ENCODE measurements at regions of chr12 and their contacts with region 1.

Region 1: GRCh38 chr12:6554168-6555017 is 1.4 kb downstream of the IFFO1 start:
- DNase-seq: peak in 34 of 35 experiments; percentile 32 to 79 (median 59)
- ATAC-seq: peak; percentile 46 to 61 (median 58)
- H3K4me3 ChIP-seq: peak overlapping the region; percentile 70 to 81
- H3K4me3 Mint-ChIP-seq: peak overlapping the region; percentile 89 to 93 (median 90)
- H3K27ac ChIP-seq: no peak overlapping the region
- H3K27ac Mint-ChIP-seq: peak overlapping the region; percentile 75 to 84
- H3K4me1 ChIP-seq: peaks cover 15 to 69% of the 10 kb centered on the region in 2 experiments
- H3K4me1 Mint-ChIP-seq: peaks cover 50 to 59% (median 50%) of the 10 kb centered on the region in 3 donors
- H3K27me3 ChIP-seq: no peaks in the 10 kb centered on the region
- H3K27me3 Mint-ChIP-seq: no peaks in the 10 kb centered on the region

Region 2: DNA sequence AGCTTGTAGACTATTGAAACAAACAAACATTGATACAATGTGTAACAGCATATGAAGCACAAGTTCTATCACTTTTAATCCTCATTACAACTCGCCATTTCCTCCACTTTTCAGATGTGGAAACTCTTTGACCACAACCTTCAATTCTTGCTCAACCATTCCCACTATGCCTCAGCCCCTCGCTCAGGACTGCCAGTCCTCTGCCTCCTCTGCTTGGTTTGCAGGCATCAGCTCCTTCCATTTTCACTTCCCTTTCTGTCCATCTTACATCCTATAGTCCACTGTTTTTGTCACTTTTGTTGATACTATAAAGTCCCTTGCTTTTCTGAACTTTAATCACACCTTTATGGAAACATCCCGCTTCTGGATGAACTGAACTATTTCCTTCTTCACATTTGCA is 137.8 kb before region 1 on chr12:
- CTCF ChIA-PET with region 1: no interaction called
- POLR2A ChIA-PET with region 1: no interaction called
- DNase-seq: no peak
- ATAC-seq: no peak
- H3K4me3 ChIP-seq: no peak overlapping the region
- H3K4me3 Mint-ChIP-seq: no peak overlapping the region
- H3K27ac ChIP-seq: no peak overlapping the region
- H3K27ac Mint-ChIP-seq: no peak overlapping the region
- H3K4me1 ChIP-seq: no peaks in the 10 kb centered on the region
- H3K4me1 Mint-ChIP-seq: no peaks in the 10 kb centered on the region
- H3K27me3 ChIP-seq: peaks cover 0 to 4% of the 10 kb centered on the region in 2 experiments
- H3K27me3 Mint-ChIP-seq: peaks cover 0 to 4% of the 10 kb centered on the region in 2 donors

Region 3: DNA sequence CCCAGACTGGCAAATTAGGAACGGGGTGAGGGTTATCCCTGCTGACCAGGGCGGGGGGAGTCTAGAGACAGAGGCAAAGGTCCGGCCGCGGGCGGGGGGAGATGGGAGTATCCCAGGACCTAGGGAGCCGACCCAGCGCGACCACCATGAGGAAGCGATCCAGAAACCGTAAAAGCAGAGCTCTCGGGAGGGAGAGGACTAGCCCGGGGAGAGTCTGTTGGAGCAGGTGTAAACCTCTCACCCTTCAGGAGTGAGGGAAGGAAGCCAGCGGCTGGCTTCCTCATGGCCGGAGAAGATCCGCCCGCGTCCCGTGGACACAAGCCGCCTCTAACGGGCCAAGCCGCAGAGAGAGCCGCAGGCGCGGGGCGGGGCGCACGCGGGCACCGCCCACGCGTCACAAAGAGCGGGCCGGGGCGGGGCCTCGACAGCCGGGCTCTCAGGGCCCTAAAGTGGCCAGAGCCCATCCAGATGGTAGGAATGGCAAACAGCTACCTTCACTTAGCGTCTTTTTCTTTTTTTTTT is 92.8 kb after region 1 on chr12 and contains the start of gene ACRBP:
- CTCF ChIA-PET with region 1: no interaction called
- POLR2A ChIA-PET with region 1: no interaction called
- DNase-seq: peak in 9 of 35 experiments; percentile 7 to 47 (median 18)
- ATAC-seq: peak; percentile 52 to 85 (median 79)
- H3K4me3 ChIP-seq: peak within 1 kb of the TSS; percentile 34 to 42
- H3K4me3 Mint-ChIP-seq: peak within 1 kb of the TSS; percentile 63 to 83 (median 64)
- H3K27ac ChIP-seq: no peak within 1 kb of the TSS
- H3K27ac Mint-ChIP-seq: peak within 1 kb of the TSS; percentile 4 to 49
- H3K4me1 ChIP-seq: peaks cover 0 to 13% of the 10 kb centered on the region in 2 experiments
- H3K4me1 Mint-ChIP-seq: peaks cover 10 to 25% (median 16%) of the 10 kb centered on the region in 3 donors
- H3K27me3 ChIP-seq: peaks cover 0 to 10% of the 10 kb centered on the region in 2 experiments
- H3K27me3 Mint-ChIP-seq: no peaks in the 10 kb centered on the region
- total RNA-seq, gene ACRBP: 2.4 to 11.1 (median 6.5) TPM

Region 4: DNA sequence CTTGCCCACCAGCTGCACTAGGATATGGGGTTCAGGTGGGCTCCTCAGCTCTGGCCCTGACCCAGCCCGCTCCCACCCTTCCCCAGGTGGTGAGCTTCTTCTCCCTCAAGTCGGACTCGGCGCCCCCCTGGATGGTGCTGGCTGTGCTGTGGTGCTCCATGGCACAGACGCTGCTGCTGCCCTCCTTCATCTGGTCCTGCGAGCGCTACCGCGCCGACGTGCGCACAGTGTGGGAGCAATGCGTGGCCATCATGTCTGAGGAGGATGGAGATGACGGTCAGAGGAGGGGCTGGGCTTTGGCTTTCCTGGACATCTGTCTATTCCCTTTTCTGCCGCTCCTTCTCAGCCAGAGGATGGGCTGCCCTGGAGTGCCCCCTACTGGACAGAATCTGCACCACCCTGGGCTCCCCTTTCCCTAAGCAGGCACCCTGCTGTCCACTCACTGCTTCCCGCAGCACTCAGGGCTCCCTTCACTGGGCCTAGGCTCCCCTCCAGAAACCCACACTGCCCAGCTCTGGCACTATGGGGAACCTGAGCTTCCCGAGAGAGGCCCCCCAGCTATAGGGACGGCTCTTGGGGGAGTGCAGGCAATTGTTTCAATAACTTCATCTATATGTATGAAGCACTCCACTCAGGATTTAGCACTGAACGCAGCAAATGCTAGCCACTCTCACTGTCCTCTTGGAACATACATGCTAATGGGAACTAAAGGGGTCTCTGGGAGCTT is 271.2 kb after region 1 on chr12:
- CTCF ChIA-PET with region 1: interaction called in 1 of 2 experiments, 12 read pairs
- POLR2A ChIA-PET with region 1: no interaction called
- DNase-seq: peak; percentile 36 to 87 (median 71)
- ATAC-seq: peak; percentile 46 to 69 (median 50)
- H3K4me3 ChIP-seq: no peak overlapping the region
- H3K4me3 Mint-ChIP-seq: no peak overlapping the region
- H3K27ac ChIP-seq: no peak overlapping the region
- H3K27ac Mint-ChIP-seq: peak overlapping the region in 1 of 2 donors; percentile 34
- H3K4me1 ChIP-seq: peaks cover 3 to 47% of the 10 kb centered on the region in 2 experiments
- H3K4me1 Mint-ChIP-seq: peaks cover 29 to 52% (median 33%) of the 10 kb centered on the region in 3 donors
- H3K27me3 ChIP-seq: peaks cover 0 to 91% of the 10 kb centered on the region in 2 experiments
- H3K27me3 Mint-ChIP-seq: peaks cover 16 to 64% of the 10 kb centered on the region in 2 donors